Calu3 (cell line): ENCODE measurements at regions of chr14 and their contacts with region 1.

Region 1: DNA sequence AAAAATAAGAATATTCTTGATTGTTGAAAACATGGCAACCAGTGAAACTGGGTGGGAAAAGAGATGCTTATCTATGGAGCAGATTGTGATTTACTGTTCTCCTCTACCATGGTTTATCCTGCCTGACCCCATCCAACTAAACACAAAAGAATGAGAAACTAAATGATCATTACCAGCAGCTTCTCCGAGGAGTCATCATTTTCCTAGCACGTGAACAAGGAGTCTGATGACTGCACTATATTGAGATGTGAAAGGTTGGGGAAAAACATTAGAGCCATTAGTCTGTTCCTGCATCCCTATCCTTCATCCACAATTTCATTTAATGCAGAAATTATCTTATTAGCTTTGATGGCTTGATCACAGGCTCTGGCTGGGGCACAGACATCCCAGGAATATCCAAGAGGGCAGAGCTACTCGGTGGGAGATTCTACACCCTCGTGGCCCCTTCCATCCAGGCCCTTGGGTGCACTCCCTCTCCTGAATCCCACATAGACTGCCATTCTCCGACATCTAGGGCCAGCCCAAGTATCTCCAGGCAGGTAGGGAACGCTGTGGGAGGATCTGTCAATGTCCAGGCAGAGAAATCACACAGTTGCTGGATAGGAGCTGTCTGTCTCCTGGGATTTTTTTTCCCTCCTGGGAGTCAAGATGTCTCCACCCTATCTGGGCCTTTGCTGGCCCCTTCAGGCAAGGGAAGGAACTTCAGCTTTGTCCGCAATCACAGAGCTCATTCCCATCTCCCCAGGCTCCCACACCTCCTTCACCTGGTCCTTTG is 43.3 kb upstream of the DHRS4 start:
- DNase-seq: peak; percentile 74
- H3K4me3 Mint-ChIP-seq: no peak overlapping the region
- H3K27ac Mint-ChIP-seq: no peak overlapping the region
- H3K4me1 Mint-ChIP-seq: no peaks in the 10 kb centered on the region
- H3K27me3 Mint-ChIP-seq: peaks cover 67% of the 10 kb centered on the region
- CTCF ChIP-seq: peak; percentile 75

Region 2: DNA sequence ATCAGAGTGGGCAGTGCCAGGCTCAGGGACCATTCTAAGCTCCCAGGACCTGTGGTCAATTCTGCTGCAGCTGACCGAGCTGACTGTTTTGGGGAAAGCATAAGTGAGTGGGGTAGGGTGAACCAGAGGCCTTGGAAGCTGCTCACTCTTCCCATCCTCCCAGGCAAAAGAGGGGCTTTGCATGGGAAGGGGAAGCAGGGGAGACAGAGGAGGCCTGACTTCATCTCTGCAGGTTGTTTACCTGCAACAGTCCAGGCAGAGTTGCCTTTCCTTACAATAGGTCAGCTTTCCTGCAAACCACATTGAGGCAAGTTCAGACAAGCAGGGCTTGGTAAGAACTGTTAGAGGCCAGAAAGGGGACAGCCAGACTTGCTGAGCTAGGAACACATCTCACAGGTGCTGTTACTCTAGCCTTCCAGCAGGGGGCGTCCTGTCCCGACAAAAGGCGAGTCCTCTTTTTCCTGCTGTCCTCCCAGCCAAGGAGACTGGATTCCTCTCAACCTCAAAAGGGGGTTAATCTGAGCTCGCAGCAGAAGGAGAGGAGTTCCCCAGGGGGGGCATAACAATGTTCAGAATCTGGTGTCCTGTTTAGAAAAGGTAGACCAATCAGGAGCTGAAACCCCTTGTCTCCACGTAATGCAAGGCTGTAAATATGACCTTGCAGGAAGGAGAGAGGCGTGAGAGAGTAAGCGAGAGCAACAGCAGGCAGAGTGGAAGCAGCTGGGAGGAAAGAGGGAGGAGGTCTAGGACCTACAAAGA is 278.4 kb before region 1 on chr14:
- CTCF ChIA-PET with region 1: interaction called, 23 read pairs
- intact Hi-C with region 1: loop called (anchors 5 kb)
- DNase-seq: peak; percentile 84
- H3K4me3 Mint-ChIP-seq: no peak overlapping the region
- H3K27ac Mint-ChIP-seq: no peak overlapping the region
- H3K4me1 Mint-ChIP-seq: peaks cover 7% of the 10 kb centered on the region
- H3K27me3 Mint-ChIP-seq: peaks cover 56% of the 10 kb centered on the region
- CTCF ChIP-seq: peak; percentile 86

Region 3: GRCh38 chr14:23665375-23666192 is 244.7 kb before region 1 on chr14:
- CTCF ChIA-PET with region 1: interaction called, 45 read pairs
- intact Hi-C with region 1: loop called (anchors 10 kb)
- DNase-seq: peak; percentile 48
- H3K4me3 Mint-ChIP-seq: no peak overlapping the region
- H3K27ac Mint-ChIP-seq: no peak overlapping the region
- H3K4me1 Mint-ChIP-seq: no peaks in the 10 kb centered on the region
- H3K27me3 Mint-ChIP-seq: peaks cover 74% of the 10 kb centered on the region
- CTCF ChIP-seq: no peak

Region 4: DNA sequence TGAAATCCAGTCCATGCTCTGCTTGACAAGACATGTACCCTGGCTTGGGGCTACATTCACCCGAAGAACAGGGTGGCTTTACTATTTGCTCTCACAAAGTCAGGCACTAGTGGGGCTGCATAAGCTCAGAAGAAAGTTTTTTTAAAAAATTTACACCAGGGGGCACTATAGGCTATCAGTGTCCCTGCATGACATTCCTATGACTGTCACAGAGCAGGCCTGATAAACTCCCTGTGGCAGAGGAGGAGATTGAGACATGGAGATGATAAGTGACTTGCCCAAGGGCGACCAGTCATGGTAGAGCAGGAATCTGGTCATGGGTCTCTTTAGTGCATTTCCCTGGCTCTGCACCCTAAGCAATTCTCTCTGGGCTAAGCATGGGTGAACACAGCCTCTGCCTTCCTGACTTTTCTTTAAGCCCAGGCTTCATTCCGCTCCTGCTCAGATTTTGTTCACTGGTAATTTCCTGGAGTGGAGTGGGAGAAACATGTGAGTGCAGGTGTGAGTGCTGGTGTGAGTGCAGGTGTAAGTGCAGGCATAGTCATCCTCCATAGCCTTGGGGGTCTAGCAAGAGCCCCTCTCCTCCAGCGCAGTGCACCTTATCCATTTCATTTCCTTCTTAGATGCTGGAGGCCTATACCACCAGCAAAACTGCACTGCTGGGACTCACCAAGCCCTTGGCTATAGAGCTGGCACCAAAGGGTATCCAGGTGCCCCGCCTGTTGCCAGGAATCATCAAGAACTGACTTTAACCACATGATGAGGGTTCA is 182.5 kb before region 1 on chr14:
- CTCF ChIA-PET with region 1: interaction called, 12 read pairs
- intact Hi-C with region 1: loop called (anchors 1 kb)
- DNase-seq: peak; percentile 23
- H3K4me3 Mint-ChIP-seq: no peak overlapping the region
- H3K27ac Mint-ChIP-seq: no peak overlapping the region
- H3K4me1 Mint-ChIP-seq: peaks cover 7% of the 10 kb centered on the region
- H3K27me3 Mint-ChIP-seq: peaks cover 40% of the 10 kb centered on the region
- CTCF ChIP-seq: peak; percentile 25

Region 5: GRCh38 chr14:23793532-23793931 is 116.8 kb before region 1 on chr14:
- CTCF ChIA-PET with region 1: no interaction called
- intact Hi-C with region 1: no loop called
- DNase-seq: no peak
- H3K4me3 Mint-ChIP-seq: no peak overlapping the region
- H3K27ac Mint-ChIP-seq: no peak overlapping the region
- H3K4me1 Mint-ChIP-seq: no peaks in the 10 kb centered on the region
- H3K27me3 Mint-ChIP-seq: peaks cover 55% of the 10 kb centered on the region
- CTCF ChIP-seq: no peak